ENCODE measurements at regions of chr10 and their contacts with region 1.

Region 1: DNA sequence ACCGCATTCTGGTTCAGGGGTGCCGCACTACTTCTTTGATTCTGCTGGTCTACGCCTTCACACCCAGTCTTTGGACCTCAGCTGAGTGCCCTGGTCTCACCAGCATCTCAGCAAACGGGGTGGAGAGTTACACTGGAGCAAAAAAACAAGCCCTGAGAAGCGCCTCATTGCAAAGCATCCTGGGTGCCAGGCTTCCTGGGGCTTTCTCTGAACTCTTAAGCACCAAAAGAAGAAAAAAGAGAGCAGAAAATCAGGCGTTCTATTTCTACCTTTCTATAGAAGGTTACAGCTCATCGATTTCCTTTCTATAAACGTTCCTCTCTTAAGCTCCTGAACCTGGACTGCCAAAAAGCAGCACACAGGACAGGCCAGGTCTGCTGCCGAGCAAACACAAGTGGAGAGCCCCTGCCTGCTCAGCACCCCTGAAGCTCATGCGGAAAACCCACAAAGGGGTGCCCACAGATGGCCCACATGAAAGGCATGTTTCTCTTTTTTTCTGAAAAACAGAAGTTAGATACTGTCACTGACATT is 217.9 kb downstream of the SFMBT2 start:
- DNase-seq: peak; percentile 41 to 84 (median 60)
- ATAC-seq: peak; percentile 86
- H3K4me3 ChIP-seq: peak overlapping the region; percentile 40
- H3K4me3 Mint-ChIP-seq: peak overlapping the region; percentile 84
- H3K27ac ChIP-seq: peak overlapping the region; percentile 65 to 66
- H3K27ac Mint-ChIP-seq: peak overlapping the region; percentile 95
- H3K4me1 ChIP-seq: peaks cover 56% of the 10 kb centered on the region
- H3K4me1 Mint-ChIP-seq: peaks cover 74% of the 10 kb centered on the region
- H3K27me3 ChIP-seq: no peaks in the 10 kb centered on the region
- H3K27me3 Mint-ChIP-seq: no peaks in the 10 kb centered on the region
- CTCF ChIP-seq: no peak

Region 2: DNA sequence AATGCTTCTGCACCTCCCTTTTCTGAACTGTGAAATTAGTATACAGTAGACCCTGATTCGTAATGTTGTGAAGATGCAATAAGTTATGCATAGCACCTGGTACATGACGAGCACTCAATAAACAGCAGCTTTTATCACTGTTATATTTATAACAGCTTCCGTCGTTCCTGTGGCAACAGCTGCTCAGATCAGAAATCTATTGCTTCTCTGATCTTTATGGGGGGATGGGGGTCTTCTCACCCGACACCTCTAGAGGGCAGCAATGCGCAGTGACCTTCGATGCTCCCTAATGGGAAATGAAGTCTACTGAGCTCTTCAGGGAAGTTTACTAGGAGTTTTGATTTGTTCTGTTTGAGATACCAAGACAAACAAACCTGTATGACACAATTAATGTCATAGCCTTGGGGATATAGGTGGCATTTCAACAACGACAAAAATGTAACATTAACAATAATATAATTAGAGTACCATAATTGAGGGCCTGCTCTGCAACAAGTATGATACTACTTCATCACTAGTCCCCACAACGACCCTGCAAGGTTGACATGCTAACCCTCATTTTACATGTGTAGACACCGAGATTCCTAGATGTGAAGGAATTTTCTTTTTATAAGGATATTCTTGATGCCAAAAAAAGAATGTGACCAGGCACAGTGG is 71.6 kb before region 1 on chr10:
- CTCF ChIA-PET with region 1: interaction called, 3 read pairs
- POLR2A ChIA-PET with region 1: no interaction called
- intact Hi-C with region 1: loop called (anchors 1 to 5 kb)
- DNase-seq: peak; percentile 48 to 84 (median 61)
- ATAC-seq: peak; percentile 94
- H3K4me3 ChIP-seq: no peak overlapping the region
- H3K4me3 Mint-ChIP-seq: no peak overlapping the region
- H3K27ac ChIP-seq: no peak overlapping the region
- H3K27ac Mint-ChIP-seq: peak overlapping the region; percentile 65
- H3K4me1 ChIP-seq: peaks cover 7% of the 10 kb centered on the region
- H3K4me1 Mint-ChIP-seq: peaks cover 8% of the 10 kb centered on the region
- H3K27me3 ChIP-seq: no peaks in the 10 kb centered on the region
- H3K27me3 Mint-ChIP-seq: no peaks in the 10 kb centered on the region
- CTCF ChIP-seq: peak; percentile 82

Region 3: DNA sequence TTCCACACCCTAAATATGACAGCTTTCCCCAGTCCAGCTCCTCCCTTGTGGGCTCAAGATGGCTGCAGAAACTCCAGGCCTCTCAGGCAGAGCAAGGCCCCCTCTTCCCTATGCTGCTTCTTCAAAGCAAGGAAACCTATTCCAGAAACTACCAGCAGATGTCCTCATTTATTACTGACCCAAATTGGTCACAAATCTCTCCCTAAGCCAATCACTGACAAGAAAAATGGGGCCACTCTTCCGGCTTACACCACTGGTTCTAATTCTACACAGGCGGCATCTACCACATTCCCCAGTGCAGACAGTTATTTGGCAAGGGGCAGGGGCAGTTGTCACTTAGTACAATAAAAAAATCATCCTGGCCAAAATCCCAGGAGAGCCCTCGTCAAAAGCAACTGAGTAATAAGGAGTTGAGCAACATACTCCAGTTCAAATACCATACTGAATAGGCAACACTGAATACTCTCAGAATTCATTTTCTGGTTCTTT is 67.6 kb after region 1 on chr10:
- CTCF ChIA-PET with region 1: no interaction called
- POLR2A ChIA-PET with region 1: interaction called, 3 read pairs
- intact Hi-C with region 1: loop called in 1 of 2 experiments (anchors 5 kb)
- DNase-seq: peak in 4 of 14 experiments; percentile 25 to 75 (median 68)
- ATAC-seq: peak; percentile 27
- H3K4me3 ChIP-seq: no peak overlapping the region
- H3K4me3 Mint-ChIP-seq: peak overlapping the region; percentile 30
- H3K27ac ChIP-seq: no peak overlapping the region
- H3K27ac Mint-ChIP-seq: peak overlapping the region; percentile 85
- H3K4me1 ChIP-seq: peaks cover 42% of the 10 kb centered on the region
- H3K4me1 Mint-ChIP-seq: peaks cover 59% of the 10 kb centered on the region
- H3K27me3 ChIP-seq: no peaks in the 10 kb centered on the region
- H3K27me3 Mint-ChIP-seq: no peaks in the 10 kb centered on the region
- CTCF ChIP-seq: peak; percentile 65

Region 4: DNA sequence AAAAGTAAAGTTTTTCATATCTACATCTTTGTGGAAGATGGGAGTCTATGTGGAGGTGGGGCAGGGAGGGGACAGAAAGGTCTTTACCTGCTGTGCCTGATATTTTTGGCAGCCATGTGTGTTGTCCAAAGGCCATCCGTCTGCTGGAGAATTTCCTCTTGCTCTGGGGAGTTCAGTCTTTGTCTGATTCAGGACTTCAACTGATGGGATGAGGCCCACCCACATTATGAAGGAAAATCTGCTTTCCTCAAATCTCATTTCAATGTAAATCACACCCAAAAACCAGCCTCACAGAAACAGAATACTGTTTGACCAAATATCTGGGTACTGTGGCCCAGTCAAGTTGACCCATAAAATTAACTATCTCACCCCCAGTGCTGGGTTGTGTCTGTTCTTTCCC is 486.4 kb after region 1 on chr10:
- CTCF ChIA-PET with region 1: no interaction called
- POLR2A ChIA-PET with region 1: no interaction called
- intact Hi-C with region 1: loop called in 1 of 2 experiments (anchors 5 kb)
- DNase-seq: no peak
- ATAC-seq: no peak
- H3K4me3 ChIP-seq: no peak overlapping the region
- H3K4me3 Mint-ChIP-seq: no peak overlapping the region
- H3K27ac ChIP-seq: no peak overlapping the region
- H3K27ac Mint-ChIP-seq: no peak overlapping the region
- H3K4me1 ChIP-seq: no peaks in the 10 kb centered on the region
- H3K4me1 Mint-ChIP-seq: no peaks in the 10 kb centered on the region
- H3K27me3 ChIP-seq: peaks cover 8 to 22% of the 10 kb centered on the region in 2 experiments
- H3K27me3 Mint-ChIP-seq: peaks cover 36% of the 10 kb centered on the region
- CTCF ChIP-seq: no peak

Measured in CD4-positive, alpha-beta T cell (primary cell).